HEK293 (cell line): ENCODE measurements at regions of chr11 and their contacts with region 1.

Region 1: DNA sequence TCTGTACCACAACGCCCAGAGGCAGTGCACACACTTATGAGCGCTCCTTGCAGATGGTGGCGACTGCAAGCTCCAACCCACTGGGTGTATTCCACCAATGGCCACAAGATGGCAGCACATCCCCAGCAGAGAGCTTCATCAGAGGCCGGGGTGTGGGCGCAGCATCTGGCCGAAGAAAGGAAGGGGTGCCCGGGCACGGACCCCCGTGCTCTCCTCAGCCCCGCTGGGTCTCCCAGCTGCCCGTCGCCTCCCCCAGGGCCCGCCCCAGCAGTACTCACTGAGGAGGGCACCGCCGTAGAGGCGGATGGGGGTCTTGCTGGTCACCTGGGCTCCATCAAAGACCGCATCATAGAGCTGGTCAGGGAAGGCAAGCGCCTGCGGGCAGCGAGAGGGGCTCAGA is 14.2 kb downstream of the TP53I11 start:
- H3K4me3 ChIP-seq: no peak overlapping the region
- H3K27ac ChIP-seq: no peak overlapping the region
- H3K4me1 ChIP-seq: no peaks in the 10 kb centered on the region
- CTCF ChIP-seq: peak; percentile 77

Region 2: GRCh38 chr11:44949160-44950030 is 12.9 kb after region 1 on chr11:
- CTCF ChIA-PET with region 1: interaction called, 37 read pairs
- POLR2A ChIA-PET with region 1: interaction called, 3 read pairs
- H3K4me3 ChIP-seq: peak overlapping the region; percentile 71
- H3K27ac ChIP-seq: no peak overlapping the region; the same call in 1 of the 2 replicates
- H3K4me1 ChIP-seq: no peaks in the 10 kb centered on the region
- CTCF ChIP-seq: no peak

Region 3: GRCh38 chr11:44977476-44977984 is 41.0 kb after region 1 on chr11:
- CTCF ChIA-PET with region 1: interaction called, 16 read pairs
- POLR2A ChIA-PET with region 1: no interaction called
- H3K4me3 ChIP-seq: no peak overlapping the region
- H3K27ac ChIP-seq: no peak overlapping the region
- H3K4me1 ChIP-seq: no peaks in the 10 kb centered on the region; the same call in 1 of the 2 replicates
- CTCF ChIP-seq: no peak

Region 4: GRCh38 chr11:45079943-45080719 is 143.6 kb after region 1 on chr11:
- CTCF ChIA-PET with region 1: interaction called, 11 read pairs
- POLR2A ChIA-PET with region 1: no interaction called
- H3K4me3 ChIP-seq: no peak overlapping the region
- H3K27ac ChIP-seq: no peak overlapping the region
- H3K4me1 ChIP-seq: no peaks in the 10 kb centered on the region
- CTCF ChIP-seq: no peak